ENCODE measurements at regions of chr17 and their contacts with region 1.

Region 1: GRCh38 chr17:50949989-50950881 is 84.1 kb upstream of the TOB1 start:
- DNase-seq: peak; percentile 32 to 80 (median 60)
- ATAC-seq: peak; percentile 87
- H3K4me3 ChIP-seq: no peak overlapping the region
- H3K4me3 Mint-ChIP-seq: no peak overlapping the region
- H3K27ac ChIP-seq: no peak overlapping the region
- H3K27ac Mint-ChIP-seq: no peak overlapping the region
- H3K4me1 ChIP-seq: peaks cover 12% of the 10 kb centered on the region
- H3K4me1 Mint-ChIP-seq: peaks cover 22% of the 10 kb centered on the region
- H3K27me3 ChIP-seq: no peaks in the 10 kb centered on the region
- H3K27me3 Mint-ChIP-seq: no peaks in the 10 kb centered on the region
- CTCF ChIP-seq: peak; percentile 49

Region 2: DNA sequence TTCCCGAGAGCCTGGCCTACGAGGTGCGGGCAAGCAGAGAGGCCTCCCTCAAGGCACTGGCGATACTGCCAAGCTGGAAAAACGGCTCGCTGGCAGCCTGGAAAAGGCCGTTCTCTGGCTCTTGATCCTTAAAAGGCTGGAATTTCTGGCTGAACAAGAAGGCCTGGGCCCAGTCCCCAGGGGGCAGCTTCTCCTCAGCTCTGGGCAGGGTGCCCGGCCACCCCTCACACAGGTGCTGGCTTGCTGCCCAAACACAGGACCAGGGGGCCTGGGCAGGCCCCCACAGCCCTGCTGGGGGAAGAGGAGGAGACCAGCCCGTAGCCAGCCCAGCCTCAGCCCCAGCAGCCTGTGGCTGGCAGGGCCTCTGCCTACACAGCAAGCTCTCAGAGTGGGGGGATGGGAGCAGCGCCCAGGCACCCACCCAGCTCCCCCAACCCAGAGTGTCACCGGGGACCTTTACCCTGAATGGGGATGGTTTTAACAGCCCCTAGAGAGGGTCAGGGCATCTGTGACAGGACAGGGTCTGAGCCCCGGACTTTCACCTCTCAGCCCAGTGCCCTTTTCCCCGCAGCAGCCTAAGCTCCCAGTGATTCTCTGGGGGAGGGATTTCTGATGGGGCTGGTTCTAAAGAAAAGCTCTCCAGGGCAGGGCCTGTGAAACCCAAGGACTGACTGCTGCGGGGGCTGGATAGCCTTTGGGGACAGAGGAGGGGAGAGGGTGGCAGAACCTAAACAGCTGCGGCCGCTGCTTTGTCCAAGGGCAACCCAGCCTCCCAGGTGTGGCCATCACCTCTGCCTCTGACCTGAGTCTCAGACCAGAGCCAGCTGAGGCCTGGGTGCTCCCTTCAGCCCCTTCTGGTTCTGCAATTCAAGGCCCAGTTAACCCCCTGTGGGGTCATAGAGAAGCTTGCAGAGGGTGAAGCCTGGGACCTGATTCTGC is 45.4 kb before region 1 on chr17:
- CTCF ChIA-PET with region 1: interaction called, 11 read pairs
- POLR2A ChIA-PET with region 1: interaction called, 5 read pairs
- intact Hi-C with region 1: no loop called
- DNase-seq: peak in 1 of 9 experiments; percentile 29
- ATAC-seq: no peak
- H3K4me3 ChIP-seq: no peak overlapping the region
- H3K4me3 Mint-ChIP-seq: no peak overlapping the region
- H3K27ac ChIP-seq: peak overlapping the region; percentile 46 to 73
- H3K27ac Mint-ChIP-seq: peak overlapping the region; percentile 89
- H3K4me1 ChIP-seq: peaks cover 67% of the 10 kb centered on the region
- H3K4me1 Mint-ChIP-seq: peaks cover 61% of the 10 kb centered on the region
- H3K27me3 ChIP-seq: no peaks in the 10 kb centered on the region
- H3K27me3 Mint-ChIP-seq: no peaks in the 10 kb centered on the region
- CTCF ChIP-seq: no peak

Measured in CD8-positive, alpha-beta T cell (primary cell).